ENCODE measurements at regions of chr1 and their contacts with region 1.

Region 1: DNA sequence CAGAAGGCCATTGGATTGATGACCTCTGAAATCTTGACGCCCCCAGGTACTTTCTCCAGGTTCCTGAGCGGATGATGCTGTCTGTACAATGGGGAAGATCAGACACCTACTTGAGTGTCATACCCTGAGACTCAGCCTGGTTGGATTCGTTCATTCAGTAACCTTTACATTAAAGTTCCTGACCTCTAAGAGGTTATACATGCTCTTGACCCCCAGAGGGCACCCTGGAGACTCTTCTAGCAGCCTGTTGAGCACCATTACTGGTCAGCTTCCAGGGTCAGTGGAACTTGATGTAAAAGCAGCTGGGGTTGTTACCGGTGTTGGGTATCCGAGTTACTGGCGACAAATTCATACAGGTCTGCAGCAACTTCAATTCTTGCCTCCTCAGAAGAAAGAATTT is 114.3 kb upstream of the ZNF678 start:
- DNase-seq: peak in 1 of 2 experiments; percentile 72
- H3K4me3 ChIP-seq: no peak overlapping the region
- H3K27ac ChIP-seq: no peak overlapping the region
- H3K4me1 ChIP-seq: no peaks in the 10 kb centered on the region
- H3K27me3 ChIP-seq: no peaks in the 10 kb centered on the region
- CTCF ChIP-seq: peak; percentile 12 to 72 (median 57)
- EP300 ChIP-seq: no peak
- POLR2A ChIP-seq: no peak
- RAD21 ChIP-seq: peak; percentile 59 to 75

Region 2: DNA sequence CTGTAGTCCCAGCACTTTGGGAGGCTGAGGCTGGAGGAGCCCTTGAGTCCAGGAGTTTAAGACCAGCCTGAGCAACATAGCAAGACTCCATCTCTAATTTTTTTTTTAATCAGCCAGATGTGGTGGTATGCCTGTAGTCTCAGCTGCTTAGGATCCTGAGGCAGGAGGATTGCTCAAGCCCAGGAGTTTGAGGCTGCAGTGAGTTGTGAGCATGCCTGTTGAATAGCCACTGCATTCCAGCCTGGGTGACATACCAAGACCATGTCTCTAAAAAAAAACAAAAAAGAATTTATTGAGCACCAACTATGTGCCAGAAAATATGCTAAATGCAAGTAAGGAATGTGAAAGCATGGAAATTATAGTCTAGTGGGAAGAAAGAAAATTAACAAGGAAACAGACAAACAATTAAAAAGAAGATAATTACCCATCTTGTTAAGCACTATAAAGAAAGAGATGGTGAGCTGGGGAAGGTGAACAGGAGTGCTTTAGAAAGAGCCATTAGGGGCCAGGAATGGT is 10.3 kb after region 1 on chr1:
- CTCF ChIA-PET with region 1: interaction called, 46 read pairs
- POLR2A ChIA-PET with region 1: interaction called, 3 read pairs
- DNase-seq: no peak
- H3K4me3 ChIP-seq: no peak overlapping the region
- H3K27ac ChIP-seq: no peak overlapping the region
- H3K4me1 ChIP-seq: no peaks in the 10 kb centered on the region
- H3K27me3 ChIP-seq: no peaks in the 10 kb centered on the region
- CTCF ChIP-seq: no peak
- EP300 ChIP-seq: no peak
- POLR2A ChIP-seq: no peak
- RAD21 ChIP-seq: no peak

Region 3: DNA sequence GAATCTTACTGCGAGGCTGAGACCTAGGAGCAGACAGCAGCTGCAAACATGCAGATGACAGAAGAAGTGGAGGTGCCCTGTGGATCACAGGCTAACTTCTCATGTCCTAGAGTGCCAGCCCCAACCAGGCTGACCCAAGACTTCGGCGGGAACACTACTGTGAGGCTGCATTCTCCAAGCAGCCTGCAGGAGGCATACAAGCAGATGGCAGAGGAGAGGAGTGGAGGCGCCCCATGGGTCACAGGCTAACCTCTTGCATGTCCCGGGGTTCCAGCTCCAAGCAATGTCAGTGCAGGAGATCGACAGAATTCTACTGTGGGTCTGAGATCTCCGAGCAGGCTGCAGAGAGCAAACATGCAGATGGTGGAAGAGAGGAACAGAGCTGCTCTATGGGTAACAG is 16.2 kb after region 1 on chr1:
- CTCF ChIA-PET with region 1: interaction called, 46 read pairs
- POLR2A ChIA-PET with region 1: interaction called, 3 read pairs
- DNase-seq: peak in 1 of 2 experiments; percentile 69
- H3K4me3 ChIP-seq: no peak overlapping the region
- H3K27ac ChIP-seq: no peak overlapping the region
- H3K4me1 ChIP-seq: no peaks in the 10 kb centered on the region
- H3K27me3 ChIP-seq: no peaks in the 10 kb centered on the region
- CTCF ChIP-seq: peak; percentile 60 to 72 (median 69)
- EP300 ChIP-seq: no peak
- POLR2A ChIP-seq: no peak
- RAD21 ChIP-seq: peak; percentile 41 to 61